ENCODE measurements at regions of chr9 and their contacts with region 1.

Region 1: GRCh38 chr9:109652964-109653363 is 127.0 kb upstream of the PALM2AKAP2 start:
- DNase-seq: no peak
- ATAC-seq: peak; percentile 71 to 78
- H3K4me3 ChIP-seq: no peak overlapping the region
- H3K27ac ChIP-seq: no peak overlapping the region
- H3K4me1 ChIP-seq: no peaks in the 10 kb centered on the region
- H3K27me3 ChIP-seq: no peaks in the 10 kb centered on the region

Region 2: DNA sequence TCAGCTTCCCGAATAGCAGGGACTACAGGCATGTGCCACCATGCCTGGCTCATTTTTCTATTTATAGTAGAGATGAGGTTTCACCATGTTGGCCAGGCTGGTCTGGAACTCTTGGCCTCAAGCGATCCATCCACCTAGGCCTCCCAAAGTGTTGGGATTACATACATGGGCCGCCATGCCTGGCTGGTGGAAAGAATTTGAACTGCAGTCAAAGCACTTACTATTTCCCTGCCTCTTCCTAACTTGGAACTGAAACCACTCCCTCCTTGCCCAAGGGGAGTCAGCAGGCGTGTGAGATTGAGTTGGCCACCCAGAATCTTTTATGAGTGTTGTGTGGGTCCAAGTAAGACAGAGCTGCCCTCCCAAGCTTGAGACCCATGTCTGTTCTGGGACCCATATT is 68.8 kb before region 1 on chr9:
- intact Hi-C with region 1: loop called in 1 of 4 experiments (anchors 5 kb)
- DNase-seq: no peak
- ATAC-seq: no peak
- H3K4me3 ChIP-seq: no peak overlapping the region
- H3K27ac ChIP-seq: no peak overlapping the region
- H3K4me1 ChIP-seq: peaks cover 2% of the 10 kb centered on the region
- H3K27me3 ChIP-seq: no peaks in the 10 kb centered on the region

Region 3: DNA sequence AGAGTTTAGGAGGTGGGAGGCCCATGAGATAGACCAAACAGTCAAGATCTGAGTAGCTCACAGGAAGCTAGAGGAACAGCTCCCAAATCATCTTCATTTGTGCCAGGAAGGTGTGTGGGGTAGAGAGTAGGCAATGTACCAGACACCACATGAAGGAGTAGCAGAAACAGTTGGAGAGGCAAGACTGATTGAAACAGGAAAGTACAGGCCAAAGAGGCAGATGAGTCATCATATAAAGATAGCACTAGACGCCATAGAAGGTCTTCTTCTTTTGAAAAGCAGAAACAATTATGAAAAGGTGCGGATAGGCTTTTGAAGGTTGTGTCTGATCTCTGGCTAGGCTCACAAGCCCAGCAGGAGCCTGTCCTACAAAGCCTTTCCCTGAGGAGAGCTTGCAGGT is 64.4 kb after region 1 on chr9:
- intact Hi-C with region 1: no loop called
- DNase-seq: no peak
- ATAC-seq: no peak
- H3K4me3 ChIP-seq: no peak overlapping the region
- H3K27ac ChIP-seq: no peak overlapping the region
- H3K4me1 ChIP-seq: no peaks in the 10 kb centered on the region
- H3K27me3 ChIP-seq: no peaks in the 10 kb centered on the region

Region 4: DNA sequence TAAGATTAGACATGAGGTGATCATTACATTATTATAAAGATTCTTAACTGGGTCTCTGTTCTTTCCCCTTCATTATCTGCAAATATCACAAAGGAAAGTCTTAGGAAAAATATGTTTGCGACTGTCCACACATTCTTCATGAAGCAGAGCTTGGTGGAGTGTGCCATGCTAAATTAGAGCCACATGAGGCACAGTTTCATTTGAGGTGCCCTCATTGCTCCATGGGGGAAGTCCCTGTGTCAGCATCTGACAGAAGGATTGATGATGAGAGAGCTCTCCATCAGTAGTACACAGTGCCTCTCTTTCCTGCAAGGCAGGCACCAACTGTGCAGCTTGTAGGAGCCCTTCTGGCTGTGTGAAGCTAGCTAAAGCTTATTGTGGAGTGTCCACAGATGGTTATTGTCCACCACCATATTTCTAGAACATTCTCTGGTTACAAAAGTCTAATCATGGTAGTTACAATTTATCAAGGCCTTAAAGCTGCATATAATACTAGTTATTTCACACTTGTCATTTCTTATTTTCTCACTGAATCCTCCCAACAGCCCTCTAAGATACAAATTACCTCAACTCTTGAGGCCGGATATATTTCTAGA is 491.1 kb after region 1 on chr9:
- intact Hi-C with region 1: no loop called
- DNase-seq: no peak
- ATAC-seq: peak; percentile 28 to 53
- H3K4me3 ChIP-seq: no peak overlapping the region
- H3K27ac ChIP-seq: peak overlapping the region; percentile 23
- H3K4me1 ChIP-seq: peaks cover 23% of the 10 kb centered on the region
- H3K27me3 ChIP-seq: no peaks in the 10 kb centered on the region